ENCODE measurements at regions of chr7 and their contacts with region 1.

Region 1: GRCh38 chr7:35860664-35861063 is 59.8 kb downstream of the SEPTIN7 start:
- DNase-seq: no peak
- H3K4me3 ChIP-seq: no peak overlapping the region
- H3K4me3 Mint-ChIP-seq: peak overlapping the region in 2 of 8 donors; percentile 9 to 26
- H3K27ac ChIP-seq: no peak overlapping the region
- H3K27ac Mint-ChIP-seq: peak overlapping the region in 2 of 7 donors; percentile 34 to 54
- H3K4me1 ChIP-seq: peaks cover 14% of the 10 kb centered on the region
- H3K4me1 Mint-ChIP-seq: peaks cover 32 to 58% (median 50%) of the 10 kb centered on the region in 4 donors
- H3K27me3 ChIP-seq: no peaks in the 10 kb centered on the region
- H3K27me3 Mint-ChIP-seq: no peaks in the 10 kb centered on the region

Region 2: DNA sequence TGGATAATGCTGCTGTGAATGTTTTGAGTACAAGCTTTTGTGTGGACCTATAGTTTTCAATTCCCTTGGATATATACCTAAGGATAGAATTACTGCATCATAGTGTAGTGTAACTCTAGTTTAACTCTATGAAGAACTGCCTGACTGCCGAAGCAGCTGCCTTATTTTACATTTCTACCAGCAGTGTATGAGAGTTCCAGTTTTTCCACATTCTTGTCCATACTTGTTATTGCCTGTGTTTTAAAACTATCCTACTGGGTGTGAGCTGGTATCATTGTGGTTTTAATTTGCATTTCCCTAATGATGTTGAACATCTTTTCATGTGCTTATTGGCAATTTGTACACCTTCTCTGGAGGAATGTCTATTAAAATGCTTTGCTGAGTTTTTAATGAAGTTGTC is 44.1 kb before region 1 on chr7:
- CTCF ChIA-PET with region 1: no interaction called
- POLR2A ChIA-PET with region 1: no interaction called
- intact Hi-C with region 1: loop called (anchors 5 kb)
- DNase-seq: no peak
- H3K4me3 ChIP-seq: no peak overlapping the region
- H3K4me3 Mint-ChIP-seq: peak overlapping the region in 3 of 8 donors; percentile 26 to 35 (median 31)
- H3K27ac ChIP-seq: no peak overlapping the region
- H3K27ac Mint-ChIP-seq: no peak overlapping the region
- H3K4me1 ChIP-seq: peaks cover 52% of the 10 kb centered on the region
- H3K4me1 Mint-ChIP-seq: peaks cover 67 to 93% (median 80%) of the 10 kb centered on the region in 4 donors
- H3K27me3 ChIP-seq: no peaks in the 10 kb centered on the region
- H3K27me3 Mint-ChIP-seq: no peaks in the 10 kb centered on the region